ENCODE measurements at regions of chr12 and their contacts with region 1.

Region 1: GRCh38 chr12:52023182-52023975 is 16.6 kb downstream of the TAMALIN start:
- H3K4me3 ChIP-seq: peak overlapping the region; percentile 48
- H3K27ac ChIP-seq: no peak overlapping the region
- H3K4me1 ChIP-seq: peaks cover 2% of the 10 kb centered on the region
- CTCF ChIP-seq: peak; percentile 98

Region 2: GRCh38 chr12:51424662-51425438 is 598.5 kb before region 1 on chr12 and contains the start of gene SLC4A8:
- CTCF ChIA-PET with region 1: interaction called, 10 read pairs
- POLR2A ChIA-PET with region 1: no interaction called
- H3K4me3 ChIP-seq: peak within 1 kb of the TSS; percentile 73
- H3K27ac ChIP-seq: no peak within 1 kb of the TSS
- H3K4me1 ChIP-seq: peaks cover 4% of the 10 kb centered on the region
- CTCF ChIP-seq: peak; percentile 95

Region 3: GRCh38 chr12:51846911-51847642 is 176.3 kb before region 1 on chr12:
- CTCF ChIA-PET with region 1: no interaction called
- POLR2A ChIA-PET with region 1: no interaction called
- H3K4me3 ChIP-seq: peak overlapping the region; percentile 39
- H3K27ac ChIP-seq: no peak overlapping the region
- H3K4me1 ChIP-seq: peaks cover 3% of the 10 kb centered on the region; the same call in 1 of the 2 replicates
- CTCF ChIP-seq: 0 out of 2 replicates have a peak, but pooled peaks have one; percentile 30

Region 4: GRCh38 chr12:51970904-51971646 is 52.3 kb before region 1 on chr12:
- CTCF ChIA-PET with region 1: interaction called, 11 read pairs
- POLR2A ChIA-PET with region 1: no interaction called
- H3K4me3 ChIP-seq: no peak overlapping the region; the same call in 1 of the 2 replicates
- H3K27ac ChIP-seq: no peak overlapping the region
- H3K4me1 ChIP-seq: peaks cover 20% of the 10 kb centered on the region
- CTCF ChIP-seq: peak; percentile 32; the same call in 1 of the 2 replicates

Region 5: DNA sequence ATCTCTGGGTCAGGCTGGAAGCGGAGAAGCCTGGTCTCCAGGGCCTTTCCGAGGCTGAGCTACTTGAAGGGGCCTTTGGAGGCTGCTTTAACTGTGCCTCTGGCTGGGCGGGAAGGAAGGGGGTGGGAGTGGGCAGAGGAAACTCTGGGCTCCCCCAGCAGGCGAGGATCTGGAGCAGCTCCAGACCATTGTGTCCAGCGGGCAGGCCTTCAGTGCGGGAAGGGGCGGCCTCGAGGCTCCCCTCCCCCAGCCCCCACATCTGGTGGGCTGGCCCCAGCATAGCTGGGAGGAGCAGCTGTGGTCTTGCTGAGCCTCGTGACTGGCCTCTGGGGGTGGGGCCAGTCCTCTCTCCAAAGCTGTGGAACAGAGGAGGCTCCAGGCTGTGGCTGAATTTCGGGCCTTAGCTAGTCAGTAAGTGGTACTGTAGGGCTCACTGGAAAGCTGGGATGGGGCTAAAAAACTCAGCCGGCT is 13.2 kb before region 1 on chr12:
- CTCF ChIA-PET with region 1: interaction called, 291 read pairs
- POLR2A ChIA-PET with region 1: interaction called, 8 read pairs
- H3K4me3 ChIP-seq: no peak overlapping the region
- H3K27ac ChIP-seq: peak overlapping the region; percentile 45
- H3K4me1 ChIP-seq: peaks cover 12% of the 10 kb centered on the region; the same call in 1 of the 2 replicates
- CTCF ChIP-seq: peak; percentile 9; the same call in 1 of the 2 replicates

Region 6: GRCh38 chr12:52069327-52070184 is 46.2 kb after region 1 on chr12 and contains the start of gene ATG101:
- CTCF ChIA-PET with region 1: interaction called, 794 read pairs
- POLR2A ChIA-PET with region 1: interaction called, 24 read pairs
- H3K4me3 ChIP-seq: peak within 1 kb of the TSS; percentile 87
- H3K27ac ChIP-seq: peak within 1 kb of the TSS; percentile 92
- H3K4me1 ChIP-seq: 0 out of 2 replicates have a peak, but pooled peaks cover 7% of the 10 kb centered on the region
- CTCF ChIP-seq: peak; percentile 98

Region 7: DNA sequence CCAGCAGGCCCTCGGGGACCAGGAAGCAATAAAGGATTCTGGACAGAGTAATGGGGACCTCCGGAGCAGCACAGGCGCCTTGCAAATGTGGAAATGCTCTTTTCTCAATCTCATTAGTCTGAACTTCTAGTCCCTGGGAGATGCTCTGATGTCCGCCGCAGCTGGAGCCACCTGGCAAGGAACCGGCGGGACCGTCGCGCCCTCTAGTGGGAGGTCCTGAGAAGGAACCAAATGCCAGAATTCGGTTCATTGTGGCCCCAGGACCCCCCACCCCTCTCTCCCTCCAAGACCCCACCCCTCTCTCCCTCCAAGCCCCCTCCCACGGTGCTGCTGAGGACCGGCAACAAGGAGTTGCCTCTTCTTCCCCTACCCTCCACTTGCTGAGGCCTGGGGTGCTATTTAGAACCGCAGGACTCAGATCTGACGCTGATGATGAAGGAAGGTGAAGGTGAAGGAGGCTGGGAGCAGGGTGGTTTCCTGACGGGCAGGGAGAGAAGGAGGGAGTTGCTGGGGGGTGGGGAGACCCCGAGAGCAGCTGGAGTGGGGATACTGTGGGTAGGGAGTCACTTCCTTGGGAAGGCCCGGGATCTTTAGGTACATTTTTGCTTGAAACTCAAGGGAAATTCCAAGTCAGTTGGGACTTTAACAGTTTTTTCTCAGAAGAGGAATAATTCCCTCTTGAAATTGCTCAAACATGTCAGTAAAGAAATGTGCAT is 98.6 kb after region 1 on chr12:
- CTCF ChIA-PET with region 1: interaction called, 121 read pairs
- POLR2A ChIA-PET with region 1: no interaction called
- H3K4me3 ChIP-seq: no peak overlapping the region
- H3K27ac ChIP-seq: no peak overlapping the region
- H3K4me1 ChIP-seq: peaks cover 6% of the 10 kb centered on the region; the same call in 1 of the 2 replicates
- CTCF ChIP-seq: peak; percentile 33; the same call in 1 of the 2 replicates

Measured in HEK293 (cell line).